Heart right ventricle (tissue), 16 donors: ENCODE measurements at regions of chr5 and their contacts with region 1.

Region 1: GRCh38 chr5:180810210-180810958 is 7.8 kb upstream of the MGAT1 start:
- DNase-seq: peak; percentile 97 to 98
- ATAC-seq: peak; percentile 94 to 98 (median 96)
- H3K4me3 ChIP-seq: peak overlapping the region; percentile 45 to 79 (median 76)
- H3K27ac ChIP-seq: peak overlapping the region; percentile 97 to 100 (median 99)
- H3K4me1 ChIP-seq: peaks cover 19 to 85% (median 62%) of the 10 kb centered on the region in 9 donors
- H3K27me3 ChIP-seq: no peaks in the 10 kb centered on the region
- CTCF ChIP-seq: no peak

Region 2: DNA sequence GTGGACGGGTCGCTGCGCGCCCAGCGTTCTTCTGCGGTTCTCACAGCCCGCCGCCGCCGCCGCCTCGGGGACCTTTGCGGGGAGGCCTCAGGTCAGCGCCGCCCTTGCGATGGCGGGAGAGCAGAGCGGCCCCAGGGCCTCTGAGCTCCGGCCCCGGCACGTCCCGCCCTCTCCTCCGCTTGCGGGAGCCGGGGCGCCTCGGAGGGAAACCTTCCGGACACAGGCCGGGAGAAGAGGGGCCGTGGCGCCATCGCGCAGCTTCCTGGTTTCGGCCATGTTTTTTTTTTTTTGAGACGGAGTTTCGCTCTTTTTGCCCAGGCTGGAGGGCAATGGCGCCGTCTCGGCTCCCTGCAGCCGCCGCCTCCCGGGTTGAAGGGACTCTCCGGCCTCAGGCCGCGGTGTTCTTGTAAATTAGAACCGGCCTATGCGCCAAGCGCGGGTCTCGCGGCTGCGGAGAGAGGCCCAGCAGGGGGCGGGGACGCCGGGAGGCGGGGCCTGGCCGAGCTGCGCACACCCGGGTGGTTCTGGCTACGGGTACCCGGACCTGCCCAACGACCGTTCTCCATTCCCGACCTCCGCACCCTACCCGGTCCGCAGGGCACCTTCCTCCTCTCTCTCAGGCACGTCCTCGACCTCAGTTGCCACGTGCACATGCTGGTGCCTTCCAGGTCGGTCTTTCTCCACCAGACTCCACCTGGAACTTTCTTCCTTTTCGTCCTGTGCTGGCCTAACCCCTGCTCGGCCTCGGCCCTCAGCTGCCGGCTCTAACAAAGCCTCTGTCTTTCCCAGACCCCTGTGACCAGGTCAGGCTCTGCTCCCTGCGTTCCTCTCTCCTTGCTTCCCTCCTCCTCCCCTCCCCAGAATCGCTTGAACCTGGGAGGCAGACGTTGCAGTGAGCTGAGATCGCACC is 21.0 kb after region 1 on chr5:
- intact Hi-C with region 1: loop called in 2 of 10 experiments (anchors 2 kb)
- DNase-seq: peak; percentile 88 to 90
- ATAC-seq: peak; percentile 97 to 99 (median 98)
- H3K4me3 ChIP-seq: peak overlapping the region; percentile 39 to 98 (median 92)
- H3K27ac ChIP-seq: peak overlapping the region; percentile 96 to 100 (median 99)
- H3K4me1 ChIP-seq: peaks cover 5 to 53% (median 37%) of the 10 kb centered on the region in 9 donors
- H3K27me3 ChIP-seq: no peaks in the 10 kb centered on the region
- CTCF ChIP-seq: peak in 6 of 9 donors; percentile 13 to 47 (median 36)

Region 3: DNA sequence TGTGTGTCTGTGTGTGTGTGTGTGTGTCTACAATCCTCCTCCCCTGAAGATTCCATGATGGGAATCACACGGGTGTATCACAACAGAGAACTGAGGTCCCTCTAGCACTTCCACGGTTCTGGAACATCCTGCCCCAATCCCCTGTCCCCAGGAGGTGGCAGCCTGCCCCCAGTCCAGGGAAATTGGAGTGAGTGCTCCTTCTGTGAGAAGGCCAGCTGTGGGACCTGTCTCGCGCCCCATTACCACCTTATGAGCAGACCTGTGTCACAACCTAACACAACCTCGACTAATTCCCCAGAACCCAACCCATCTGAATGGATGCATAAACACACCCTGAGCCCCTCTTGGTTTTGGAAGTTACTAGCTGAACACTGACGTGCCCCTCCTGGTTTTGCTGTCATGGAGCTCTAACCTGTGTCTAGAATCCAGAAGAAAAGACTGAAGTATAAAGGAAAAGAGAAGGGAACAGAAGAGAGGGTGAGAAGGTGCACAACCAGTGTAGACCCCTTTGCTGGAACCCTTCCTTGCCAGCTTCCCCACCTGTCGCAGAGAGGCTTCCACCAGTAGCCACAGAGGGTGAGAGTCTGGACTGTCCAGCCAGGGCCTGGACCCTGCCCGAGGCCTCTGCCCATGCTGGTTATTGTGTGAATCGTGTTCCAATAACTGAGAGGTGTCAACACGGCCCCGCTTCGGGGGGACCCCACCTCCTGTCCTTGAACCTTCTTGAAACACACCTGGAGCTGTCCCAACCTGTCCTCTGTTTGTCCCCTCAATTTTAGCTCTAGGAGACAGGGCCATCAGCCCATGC is 233.1 kb after region 1 on chr5:
- intact Hi-C with region 1: loop called in 2 of 10 experiments (anchors 1 to 5 kb)
- DNase-seq: no peak
- ATAC-seq: peak in 7 of 8 donors; percentile 35 to 60 (median 45)
- H3K4me3 ChIP-seq: peak overlapping the region in 9 of 10 donors; percentile 4 to 62 (median 48)
- H3K27ac ChIP-seq: peak overlapping the region; percentile 14 to 93 (median 86)
- H3K4me1 ChIP-seq: peaks cover 0 to 24% (median 4%) of the 10 kb centered on the region in 9 donors
- H3K27me3 ChIP-seq: peaks cover 0 to 46% (median 33%) of the 10 kb centered on the region in 7 donors
- CTCF ChIP-seq: peak in 5 of 9 donors; percentile 24 to 47 (median 33)

Region 4: DNA sequence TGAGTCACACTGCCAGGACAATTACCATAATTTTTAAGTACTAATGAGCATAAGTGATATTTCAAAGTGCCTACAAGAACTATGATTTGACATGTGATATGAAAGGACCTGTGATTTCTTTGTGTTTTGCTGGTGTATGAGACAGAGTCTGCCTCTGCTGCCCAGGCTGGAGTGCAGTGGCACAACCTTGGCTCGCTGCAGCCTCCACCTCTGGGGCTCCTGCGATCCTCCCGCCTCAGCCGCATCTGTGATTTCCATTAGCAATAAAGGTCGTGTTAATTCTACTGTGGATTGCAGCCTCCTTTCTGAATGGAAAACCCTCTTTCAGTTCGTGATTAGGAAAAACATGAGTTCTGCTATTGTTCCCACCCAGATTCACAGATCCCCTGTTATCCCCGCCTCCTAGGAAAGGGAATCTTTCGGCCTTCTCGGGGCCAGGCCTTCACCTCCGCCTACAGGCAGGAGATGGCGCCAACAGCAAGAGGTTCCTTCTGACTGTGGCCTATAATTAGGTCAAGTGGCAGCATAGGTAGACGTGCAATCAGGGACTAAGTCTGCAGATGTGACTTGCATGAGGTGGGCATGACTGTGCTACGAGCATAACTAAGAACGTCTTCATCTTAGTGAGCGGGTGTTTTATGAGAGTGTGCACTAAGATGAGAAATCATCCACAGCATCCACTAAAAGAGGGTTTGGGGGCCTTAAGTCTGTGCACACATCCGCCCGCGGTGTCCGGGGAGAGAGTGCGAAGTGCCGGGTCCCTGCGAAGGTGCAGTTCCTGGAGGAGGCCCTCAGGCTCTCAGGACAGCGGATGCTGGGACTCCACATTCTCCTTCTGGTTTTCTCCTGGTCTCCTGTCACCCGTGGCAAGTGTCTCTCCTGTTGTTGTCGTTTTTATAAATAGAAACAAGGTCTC is 371.5 kb after region 1 on chr5:
- intact Hi-C with region 1: loop called in 3 of 10 experiments (anchors 10 kb)
- DNase-seq: peak; percentile 68 to 69
- ATAC-seq: peak; percentile 67 to 87 (median 82)
- H3K4me3 ChIP-seq: no peak overlapping the region
- H3K27ac ChIP-seq: no peak overlapping the region
- H3K4me1 ChIP-seq: peaks cover 0 to 31% (median 16%) of the 10 kb centered on the region in 9 donors
- H3K27me3 ChIP-seq: peaks cover 0 to 10% (median 0%) of the 10 kb centered on the region in 7 donors
- CTCF ChIP-seq: peak; percentile 60 to 91 (median 79)

Region 5: DNA sequence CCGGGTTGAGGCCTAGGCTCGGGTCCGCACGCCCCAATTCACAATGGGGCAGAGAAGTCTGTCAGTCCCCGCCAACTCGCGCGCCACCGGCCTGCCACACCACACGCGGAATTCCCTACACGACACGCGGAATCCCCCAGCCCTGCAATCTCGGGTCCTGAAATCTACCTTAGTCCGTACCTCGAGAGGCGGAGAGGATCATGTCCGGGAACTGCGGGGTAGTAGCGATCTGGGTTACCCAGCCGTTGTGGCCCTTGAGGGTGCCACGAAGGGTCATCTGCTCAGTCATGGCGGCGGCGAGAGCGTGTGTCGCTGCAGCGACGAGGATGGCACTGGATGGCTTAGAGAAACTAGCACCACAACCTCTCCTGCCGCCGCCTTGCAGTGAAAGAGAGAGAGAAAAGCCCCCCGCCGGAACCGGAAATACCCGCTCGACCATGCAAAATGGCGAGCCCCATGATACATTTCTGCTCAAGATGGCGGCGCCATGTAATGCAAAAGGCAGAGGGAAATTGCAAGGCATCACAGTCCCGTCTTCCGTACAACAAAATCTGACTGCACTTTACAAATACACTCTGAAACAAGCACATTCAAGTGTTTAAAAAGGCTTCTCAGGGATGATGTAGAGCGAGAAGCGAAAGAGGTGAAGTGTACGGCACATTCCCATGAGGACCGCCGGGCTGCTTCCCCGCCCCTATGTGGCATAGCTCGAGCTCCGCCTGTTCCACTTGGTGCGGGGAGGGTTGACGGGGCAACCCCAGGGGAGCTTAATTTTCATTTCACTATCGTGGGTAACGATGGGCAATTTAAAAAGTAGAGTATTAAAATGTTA is 433.3 kb after region 1 on chr5 and contains the start of gene RACK1:
- intact Hi-C with region 1: loop called in 1 of 10 experiments (anchors 10 kb)
- DNase-seq: peak; percentile 85 to 93
- ATAC-seq: peak; percentile 61 to 76 (median 70)
- H3K4me3 ChIP-seq: peak within 1 kb of the TSS; percentile 76 to 94 (median 80)
- H3K27ac ChIP-seq: peak within 1 kb of the TSS; percentile 66 to 99 (median 96)
- H3K4me1 ChIP-seq: peaks cover 23 to 77% (median 58%) of the 10 kb centered on the region in 9 donors
- H3K27me3 ChIP-seq: no peaks in the 10 kb centered on the region
- CTCF ChIP-seq: no peak
- total RNA-seq, gene RACK1: 581 to 916 (median 631) TPM